H1 (cell line): ENCODE measurements at regions of chr20 and their contacts with region 1.

Region 1: GRCh38 chr20:43187476-43188233 is 2.1 kb downstream of the PTPRT start:
- DNase-seq: peak; percentile 39 to 90
- H3K4me3 ChIP-seq: peak overlapping the region; percentile 30 to 79 (median 52); a peak in 7 of 8 replicates
- H3K27ac ChIP-seq: no peak overlapping the region
- H3K4me1 ChIP-seq: peaks cover 2 to 6% (median 4%) of the 10 kb centered on the region in 4 experiments; a peak in 5 of 7 replicates
- H3K27me3 ChIP-seq: peaks cover 25 to 39% (median 35%) of the 10 kb centered on the region in 4 experiments
- CTCF ChIP-seq: peak; percentile 74 to 85 (median 81)
- EP300 ChIP-seq: no peak
- POLR2A ChIP-seq: no peak
- RAD21 ChIP-seq: peak; percentile 89 to 90

Region 2: GRCh38 chr20:43202100-43202499 is 14.4 kb after region 1 on chr20:
- CTCF ChIA-PET with region 1: interaction called, 18 read pairs
- POLR2A ChIA-PET with region 1: no interaction called
- DNase-seq: no peak
- H3K4me3 ChIP-seq: no peak overlapping the region
- H3K27ac ChIP-seq: no peak overlapping the region
- H3K4me1 ChIP-seq: peaks cover 0 to 3% (median under 1%) of the 10 kb centered on the region in 4 experiments; a peak in 2 of 7 replicates
- H3K27me3 ChIP-seq: peaks cover 0 to 3% (median under 1%) of the 10 kb centered on the region in 4 experiments; a peak in 4 of 7 replicates
- CTCF ChIP-seq: no peak
- EP300 ChIP-seq: no peak
- POLR2A ChIP-seq: no peak
- RAD21 ChIP-seq: no peak

Region 3: DNA sequence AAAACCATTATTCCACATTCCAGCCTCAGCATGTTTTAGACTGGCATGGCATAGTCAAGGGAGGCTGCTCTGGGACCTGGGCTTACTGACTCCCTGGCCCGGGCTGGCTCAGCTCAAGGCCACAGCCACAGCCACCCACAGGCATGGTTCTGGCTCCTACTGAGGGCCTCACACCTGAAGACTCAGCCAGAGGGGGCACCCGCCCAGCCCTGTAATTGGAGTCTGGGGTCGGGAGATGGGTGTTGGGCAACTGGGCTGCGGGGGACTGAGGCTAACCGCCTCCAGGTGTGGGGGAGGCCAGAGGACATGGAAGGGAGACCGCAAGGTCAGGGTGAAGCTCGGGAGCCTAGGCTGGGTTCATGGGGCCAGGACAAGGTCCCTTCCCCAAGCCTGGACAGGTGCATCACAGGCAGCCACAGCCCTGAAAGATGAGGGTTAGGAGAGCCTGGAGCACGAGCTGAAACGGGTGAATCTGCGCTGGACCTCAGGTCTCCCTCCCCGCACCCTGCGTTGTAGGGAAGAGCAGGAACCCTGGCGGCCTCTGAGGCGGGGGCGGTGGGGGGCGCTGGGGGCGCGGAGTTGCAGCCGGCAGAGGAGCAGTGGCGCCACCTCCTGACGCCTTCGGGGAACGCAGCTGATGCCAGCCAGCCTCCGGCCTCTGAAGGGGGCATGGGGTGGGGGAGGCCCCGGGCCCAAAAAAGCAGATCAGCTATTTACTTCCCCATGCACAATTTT is 202.4 kb after region 1 on chr20:
- CTCF ChIA-PET with region 1: interaction called, 10 read pairs
- POLR2A ChIA-PET with region 1: interaction called, 3 read pairs
- DNase-seq: peak in 1 of 2 experiments; percentile 92
- H3K4me3 ChIP-seq: peak overlapping the region in 1 of 4 experiments; percentile 33; a peak in 1 of 8 replicates
- H3K27ac ChIP-seq: no peak overlapping the region
- H3K4me1 ChIP-seq: peaks cover 0 to 4% (median under 1%) of the 10 kb centered on the region in 4 experiments; a peak in 3 of 7 replicates
- H3K27me3 ChIP-seq: no peaks in the 10 kb centered on the region
- CTCF ChIP-seq: peak; percentile 56 to 94 (median 75)
- EP300 ChIP-seq: no peak
- POLR2A ChIP-seq: no peak
- RAD21 ChIP-seq: peak; percentile 69 to 80